ENCODE measurements at regions of chr2 and their contacts with region 1.

Region 1: GRCh38 chr2:102082571-102083392 is 59.8 kb upstream of the IL1R1 start:
- DNase-seq: peak; percentile 74
- ATAC-seq: peak; percentile 90
- H3K4me3 Mint-ChIP-seq: peak overlapping the region; percentile 50
- H3K27ac Mint-ChIP-seq: peak overlapping the region; percentile 93
- H3K4me1 Mint-ChIP-seq: peaks cover 74% of the 10 kb centered on the region
- H3K27me3 Mint-ChIP-seq: no peaks in the 10 kb centered on the region

Region 2: DNA sequence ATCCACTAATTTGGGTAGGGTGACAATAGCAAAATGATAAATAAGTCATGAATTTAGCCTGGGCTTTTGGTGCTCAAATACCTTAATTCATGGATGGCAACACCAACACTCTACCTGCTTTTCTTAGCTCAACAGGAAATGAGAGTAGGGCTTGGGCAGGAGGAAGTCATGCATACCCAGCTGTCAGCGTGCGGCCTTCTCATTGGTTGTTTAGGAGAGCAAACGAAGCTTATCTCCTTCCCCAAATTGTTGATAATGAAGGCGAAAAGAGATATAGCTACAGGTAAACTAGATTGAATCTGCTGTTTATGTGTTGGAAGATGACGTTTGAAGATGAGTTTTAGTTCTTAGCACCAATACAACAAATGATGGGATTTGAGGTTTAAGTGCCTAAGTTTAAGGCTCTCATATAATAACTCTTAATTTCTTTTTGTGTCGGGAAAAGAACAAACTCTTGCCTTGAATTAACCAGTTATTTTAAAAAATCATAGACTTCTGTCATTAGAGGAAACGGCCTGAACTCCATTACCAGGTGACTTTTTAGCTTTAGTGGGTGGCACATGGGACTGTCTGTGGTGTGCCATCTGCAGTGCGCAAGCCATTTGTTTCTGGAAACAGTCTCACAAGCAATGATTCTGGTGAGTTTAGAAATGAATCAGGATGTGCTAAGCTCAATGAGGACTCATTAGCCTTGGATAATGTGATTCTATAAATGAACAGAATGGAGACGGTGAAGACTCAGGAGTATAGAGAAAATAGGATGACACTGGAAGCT is 365.5 kb before region 1 on chr2:
- CTCF ChIA-PET with region 1: no interaction called
- POLR2A ChIA-PET with region 1: no interaction called
- intact Hi-C with region 1: loop called (anchors 2 to 5 kb)
- DNase-seq: peak; percentile 71
- ATAC-seq: peak; percentile 50
- H3K4me3 Mint-ChIP-seq: peak overlapping the region; percentile 9
- H3K27ac Mint-ChIP-seq: peak overlapping the region; percentile 92
- H3K4me1 Mint-ChIP-seq: peaks cover 90% of the 10 kb centered on the region
- H3K27me3 Mint-ChIP-seq: no peaks in the 10 kb centered on the region

Region 3: DNA sequence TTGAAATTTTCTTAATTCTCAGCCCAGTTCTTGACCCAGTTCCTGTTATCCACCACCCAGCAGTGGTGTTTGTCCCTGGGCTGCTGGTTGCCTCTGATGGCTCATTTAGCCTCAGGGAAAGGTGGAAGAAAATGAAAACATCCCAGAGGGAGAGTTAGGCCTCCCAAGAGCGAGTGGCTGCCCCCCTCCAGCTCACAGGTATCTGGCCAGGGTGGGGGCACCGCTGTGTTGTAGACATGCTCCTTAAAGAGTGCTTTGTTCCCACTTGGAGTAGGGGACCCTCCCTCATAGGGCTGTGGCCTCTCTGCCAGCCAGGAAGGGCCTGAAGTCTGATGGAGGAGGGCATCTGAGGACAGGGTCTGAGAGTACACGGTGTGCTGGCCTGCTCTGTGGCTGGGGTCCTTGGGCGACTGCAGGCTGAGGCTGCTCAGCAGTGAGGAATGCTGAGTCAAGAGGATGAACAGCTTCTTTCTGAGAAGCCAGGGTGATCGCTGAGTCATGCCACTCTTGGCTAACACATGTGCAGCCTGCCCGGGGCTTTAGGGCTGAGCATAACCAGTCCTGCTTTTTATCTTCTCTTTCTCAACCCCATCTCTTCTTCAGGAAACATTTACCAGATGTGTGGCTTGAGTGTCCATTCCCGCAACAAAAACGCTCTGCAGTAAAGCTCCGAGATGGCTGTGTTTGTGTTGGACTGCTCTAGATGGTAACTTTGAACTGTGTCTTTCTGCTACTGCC is 18.7 kb before region 1 on chr2:
- CTCF ChIA-PET with region 1: interaction called, 4 read pairs
- POLR2A ChIA-PET with region 1: interaction called, 23 read pairs
- intact Hi-C with region 1: loop called (anchors 1 kb)
- DNase-seq: peak; percentile 77
- ATAC-seq: peak; percentile 35
- H3K4me3 Mint-ChIP-seq: no peak overlapping the region
- H3K27ac Mint-ChIP-seq: peak overlapping the region; percentile 86
- H3K4me1 Mint-ChIP-seq: peaks cover 38% of the 10 kb centered on the region
- H3K27me3 Mint-ChIP-seq: no peaks in the 10 kb centered on the region

Region 4: GRCh38 chr2:102114290-102114721 is 31.5 kb after region 1 on chr2:
- CTCF ChIA-PET with region 1: no interaction called
- POLR2A ChIA-PET with region 1: interaction called, 3 read pairs
- intact Hi-C with region 1: loop called (anchors 1 kb)
- DNase-seq: peak; percentile 52
- ATAC-seq: peak; percentile 87
- H3K4me3 Mint-ChIP-seq: peak overlapping the region; percentile 1
- H3K27ac Mint-ChIP-seq: peak overlapping the region; percentile 55
- H3K4me1 Mint-ChIP-seq: peaks cover 86% of the 10 kb centered on the region
- H3K27me3 Mint-ChIP-seq: peaks cover 14% of the 10 kb centered on the region

Region 5: GRCh38 chr2:102138331-102138730 is 55.5 kb after region 1 on chr2:
- CTCF ChIA-PET with region 1: interaction called, 3 read pairs
- POLR2A ChIA-PET with region 1: interaction called, 5 read pairs
- intact Hi-C with region 1: loop called (anchors 1 kb)
- DNase-seq: no peak
- ATAC-seq: peak; percentile 7
- H3K4me3 Mint-ChIP-seq: peak overlapping the region; percentile 7
- H3K27ac Mint-ChIP-seq: peak overlapping the region; percentile 89
- H3K4me1 Mint-ChIP-seq: peaks cover 64% of the 10 kb centered on the region
- H3K27me3 Mint-ChIP-seq: peaks cover 23% of the 10 kb centered on the region

Region 6: GRCh38 chr2:102258386-102259074 is 175.7 kb after region 1 on chr2:
- CTCF ChIA-PET with region 1: no interaction called
- POLR2A ChIA-PET with region 1: no interaction called
- intact Hi-C with region 1: loop called (anchors 1 kb)
- DNase-seq: peak; percentile 63
- ATAC-seq: peak; percentile 92
- H3K4me3 Mint-ChIP-seq: peak overlapping the region; percentile 26
- H3K27ac Mint-ChIP-seq: peak overlapping the region; percentile 97
- H3K4me1 Mint-ChIP-seq: peaks cover 45% of the 10 kb centered on the region
- H3K27me3 Mint-ChIP-seq: no peaks in the 10 kb centered on the region